Colonic mucosa (tissue), 4 donors: ENCODE measurements at regions of chr6 and their contacts with region 1.

Region 1: GRCh38 chr6:30169658-30170614 is 6.6 kb downstream of the TRIM15 start:
- DNase-seq: peak; percentile 41
- H3K4me3 ChIP-seq: no peak overlapping the region
- H3K27ac ChIP-seq: no peak overlapping the region
- H3K4me1 ChIP-seq: peaks cover 4% of the 10 kb centered on the region
- H3K27me3 ChIP-seq: peaks cover 5% of the 10 kb centered on the region
- CTCF ChIP-seq: peak; percentile 77

Region 2: GRCh38 chr6:30136570-30137286 is 33.2 kb before region 1 on chr6:
- intact Hi-C with region 1: loop called (anchors 5 kb)
- DNase-seq: peak; percentile 21
- H3K4me3 ChIP-seq: peak overlapping the region; percentile 16
- H3K27ac ChIP-seq: peak overlapping the region; percentile 41
- H3K4me1 ChIP-seq: no peaks in the 10 kb centered on the region
- H3K27me3 ChIP-seq: no peaks in the 10 kb centered on the region
- CTCF ChIP-seq: no peak

Region 3: DNA sequence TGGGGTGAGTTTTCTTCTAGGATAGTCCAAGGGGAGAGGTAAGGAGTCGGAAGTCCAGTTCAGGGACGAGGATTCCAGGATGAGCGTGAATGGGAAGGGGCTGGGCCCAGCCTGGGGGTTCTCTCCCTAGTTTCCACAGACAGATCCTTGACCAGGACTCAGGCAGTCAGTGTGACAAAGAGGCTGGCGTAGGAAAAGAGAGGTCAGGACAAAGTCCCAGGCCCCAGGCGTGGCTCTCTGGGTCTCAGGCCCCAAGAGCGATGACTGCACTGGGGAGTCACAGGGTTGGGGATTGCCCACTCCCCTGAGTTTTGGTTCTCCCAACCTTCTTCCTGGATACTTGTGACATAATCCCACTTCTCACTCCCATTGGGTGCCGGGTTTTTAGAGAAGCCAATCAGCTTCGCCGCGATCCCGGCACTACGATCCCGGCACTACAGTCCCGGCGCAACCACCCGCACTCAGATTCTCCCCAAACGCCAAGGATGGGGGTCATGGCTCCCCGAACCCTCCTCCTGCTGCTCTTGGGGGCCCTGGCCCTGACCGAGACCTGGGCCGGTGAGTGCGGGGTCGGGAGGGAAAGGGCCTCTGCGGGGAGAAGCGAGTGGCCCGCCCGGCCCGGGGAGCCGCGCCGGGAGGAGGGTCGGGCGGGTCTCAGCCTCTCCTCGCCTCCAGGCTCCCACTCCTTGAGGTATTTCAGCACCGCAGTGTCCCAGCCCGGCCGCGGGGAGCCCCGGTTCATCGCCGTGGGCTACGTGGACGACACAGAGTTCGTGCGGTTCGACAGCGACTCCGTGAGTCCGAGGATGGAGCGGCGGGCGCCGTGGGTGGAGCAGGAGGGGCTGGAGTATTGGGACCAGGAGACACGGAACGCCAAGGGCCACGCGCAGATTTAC is 89.5 kb after region 1 on chr6:
- intact Hi-C with region 1: no loop called
- DNase-seq: peak; percentile 83
- H3K4me3 ChIP-seq: peak overlapping the region; percentile 96
- H3K27ac ChIP-seq: peak overlapping the region; percentile 70
- H3K4me1 ChIP-seq: no peaks in the 10 kb centered on the region
- H3K27me3 ChIP-seq: no peaks in the 10 kb centered on the region
- CTCF ChIP-seq: no peak